ENCODE measurements at regions of chr2 and their contacts with region 1.

Region 1: DNA sequence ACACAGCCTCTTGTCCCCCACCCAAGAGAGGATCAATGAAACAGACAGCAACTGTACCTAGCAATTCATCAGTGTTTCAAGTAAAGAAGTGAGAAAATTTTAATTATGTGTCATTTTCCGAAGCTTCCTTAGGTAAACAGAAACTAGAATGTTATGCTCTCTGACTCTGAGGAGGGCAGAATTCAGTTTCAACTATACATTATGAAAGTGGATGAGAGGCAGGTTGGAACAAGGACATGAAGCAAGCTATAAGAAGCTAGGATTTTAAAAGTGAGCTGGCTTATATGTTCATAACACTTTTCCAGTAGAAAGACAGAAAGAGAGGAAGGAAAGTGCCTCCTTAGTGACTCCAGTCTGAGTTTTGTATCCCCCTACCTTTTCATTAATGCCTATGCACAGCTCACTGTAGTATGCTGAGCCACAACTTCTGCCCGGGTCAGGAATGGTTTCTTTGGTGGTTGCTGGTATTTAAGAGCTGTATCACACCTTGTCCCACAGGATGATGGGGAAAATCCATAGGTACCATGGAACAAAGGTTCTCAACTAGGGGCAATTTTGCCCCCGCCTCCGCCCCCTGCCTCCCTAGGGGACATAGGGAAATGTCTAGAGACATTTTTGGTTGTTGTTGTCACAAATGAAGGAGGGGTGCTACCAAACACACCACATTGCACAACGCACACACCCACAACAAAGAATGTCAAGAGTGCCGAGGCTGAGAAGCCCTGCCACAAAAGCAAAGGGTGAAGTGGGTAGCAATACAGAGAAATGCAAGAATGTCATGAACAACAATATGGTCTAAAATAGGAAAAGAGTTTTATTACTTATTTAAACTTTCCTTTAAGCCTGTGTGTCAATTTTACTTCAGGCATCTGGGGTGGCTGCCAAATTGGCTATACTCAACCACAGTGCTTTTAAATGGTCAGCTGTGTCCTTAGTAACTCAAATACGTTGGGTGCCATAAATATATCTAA is 161.0 kb upstream of the ZFP36L2 start:
- DNase-seq: peak; percentile 86
- ATAC-seq: peak; percentile 84
- H3K4me3 ChIP-seq: peak overlapping the region; percentile 56
- H3K27ac ChIP-seq: peak overlapping the region; percentile 99
- H3K4me1 ChIP-seq: peaks cover 53% of the 10 kb centered on the region
- H3K27me3 ChIP-seq: no peaks in the 10 kb centered on the region
- CTCF ChIP-seq: no peak
- EP300 ChIP-seq: peak; percentile 81 to 92; a peak in 3 of 4 replicates
- POLR2A ChIP-seq: no peak
- RAD21 ChIP-seq: no peak

Region 2: DNA sequence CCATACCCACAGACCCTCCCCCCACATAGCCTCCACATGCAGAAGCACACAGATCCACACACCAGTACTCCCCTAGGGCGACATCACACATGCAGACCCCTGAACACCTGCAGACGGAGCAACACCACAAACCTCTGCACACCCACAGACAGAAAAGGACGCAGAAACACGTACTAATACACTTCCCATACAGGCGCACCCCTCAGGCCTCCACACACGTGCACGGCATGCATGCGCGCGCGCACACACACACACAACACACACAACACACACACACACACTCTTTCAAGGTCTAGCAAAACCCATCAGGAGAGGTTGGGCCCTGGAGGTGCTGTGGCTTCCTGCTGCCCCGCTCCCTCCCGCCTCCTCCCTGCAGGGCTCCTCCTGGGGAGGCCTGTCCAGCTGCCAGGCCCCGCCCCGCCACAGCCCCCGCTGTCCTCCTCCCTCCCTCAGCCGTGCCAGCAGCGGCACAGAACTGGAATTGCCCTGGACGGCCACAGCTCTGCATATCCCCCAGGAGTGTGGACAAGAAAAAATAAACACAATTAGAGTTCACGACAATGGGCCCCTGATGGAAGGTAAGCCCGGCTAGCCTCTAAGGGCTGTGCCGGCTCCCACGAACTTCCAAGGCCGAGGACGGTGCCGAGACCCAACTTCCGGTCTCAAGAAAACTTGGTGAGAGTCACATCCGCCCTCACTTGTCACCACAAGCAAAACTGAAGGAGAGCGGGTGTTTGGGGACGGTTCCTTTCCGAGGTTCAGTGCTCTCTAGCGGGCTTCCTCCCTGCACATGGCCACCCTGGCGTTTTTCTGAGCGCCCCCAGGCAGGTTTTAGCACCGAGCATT is 167.8 kb before region 1 on chr2:
- CTCF ChIA-PET with region 1: interaction called, 3 read pairs
- POLR2A ChIA-PET with region 1: no interaction called
- RAD21 ChIA-PET with region 1: interaction called, 10 read pairs
- SMC1A ChIA-PET with region 1: no interaction called
- in situ Hi-C with region 1: no loop called
- intact Hi-C with region 1: no loop called
- DNase-seq: peak; percentile 80
- ATAC-seq: peak; percentile 75
- H3K4me3 ChIP-seq: peak overlapping the region; percentile 81
- H3K27ac ChIP-seq: peak overlapping the region; percentile 88
- H3K4me1 ChIP-seq: peaks cover 31% of the 10 kb centered on the region
- H3K27me3 ChIP-seq: no peaks in the 10 kb centered on the region
- CTCF ChIP-seq: no peak; a peak in 1 of 6 replicates
- EP300 ChIP-seq: peak; percentile 32 to 46; a peak in 1 of 4 replicates
- POLR2A ChIP-seq: no peak
- RAD21 ChIP-seq: no peak

Region 3: DNA sequence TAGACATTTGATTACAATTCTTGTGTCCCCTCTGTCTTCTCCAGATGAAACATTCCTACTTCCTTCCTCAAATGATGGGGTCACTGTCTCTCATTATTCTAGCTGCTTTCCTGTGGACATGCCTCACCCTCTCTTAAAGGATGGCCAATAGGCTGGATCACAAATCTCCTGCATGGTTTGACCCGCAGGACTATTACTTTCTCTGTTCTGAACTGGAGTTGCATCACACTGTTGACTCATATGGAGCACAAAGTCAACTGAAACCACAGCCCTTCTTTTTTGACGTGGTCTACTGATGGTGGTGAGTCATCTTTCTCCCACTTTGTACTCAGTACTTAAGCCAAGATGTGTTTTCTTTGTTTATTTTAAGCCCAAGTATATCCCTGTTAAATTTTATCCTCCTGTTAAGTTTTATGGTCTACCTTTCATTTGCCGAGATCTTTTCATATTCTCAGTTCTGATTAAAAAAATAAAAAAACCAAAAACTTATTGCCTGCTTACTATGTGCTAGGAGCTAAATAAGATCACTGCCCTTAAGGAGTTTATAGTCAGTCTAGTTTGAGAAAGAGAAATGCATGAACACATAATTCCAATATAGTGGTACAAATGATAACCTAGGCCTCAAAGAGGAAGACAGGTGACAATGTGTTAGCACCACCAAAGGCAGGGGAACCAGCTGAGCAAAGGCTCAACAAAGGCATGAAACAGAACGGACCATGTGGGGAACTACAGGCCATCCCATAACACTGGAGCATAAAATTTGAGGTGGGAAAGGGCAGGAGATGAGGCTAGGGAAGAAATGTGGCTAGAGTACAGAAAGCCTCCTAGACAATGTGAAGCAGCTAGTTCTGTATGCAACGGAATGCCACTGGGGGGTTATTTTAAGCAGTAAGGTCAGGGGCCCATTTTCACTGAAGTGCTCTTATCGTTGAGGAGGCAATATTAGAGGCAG is 93.4 kb before region 1 on chr2:
- CTCF ChIA-PET with region 1: interaction called, 6 read pairs
- POLR2A ChIA-PET with region 1: no interaction called
- RAD21 ChIA-PET with region 1: interaction called, 14 read pairs
- SMC1A ChIA-PET with region 1: interaction called, 18 read pairs
- in situ Hi-C with region 1: no loop called
- intact Hi-C with region 1: no loop called
- DNase-seq: peak; percentile 90
- ATAC-seq: peak; percentile 98
- H3K4me3 ChIP-seq: peak overlapping the region; percentile 6; the same call in 1 of the 2 replicates
- H3K27ac ChIP-seq: peak overlapping the region; percentile 78
- H3K4me1 ChIP-seq: peaks cover 21% of the 10 kb centered on the region
- H3K27me3 ChIP-seq: no peaks in the 10 kb centered on the region
- CTCF ChIP-seq: no peak
- EP300 ChIP-seq: peak; percentile 87 to 88; a peak in 3 of 4 replicates
- POLR2A ChIP-seq: no peak
- RAD21 ChIP-seq: 0 out of 2 replicates have a peak, but pooled peaks have one; percentile 5

Region 4: GRCh38 chr2:43402452-43402944 is 15.1 kb after region 1 on chr2:
- CTCF ChIA-PET with region 1: interaction called, 111 read pairs
- POLR2A ChIA-PET with region 1: interaction called, 95 read pairs
- RAD21 ChIA-PET with region 1: interaction called, 250 read pairs
- SMC1A ChIA-PET with region 1: interaction called, 297 read pairs
- in situ Hi-C with region 1: no loop called
- intact Hi-C with region 1: loop called (anchors 1 kb)
- DNase-seq: peak; percentile 79
- ATAC-seq: peak; percentile 73
- H3K4me3 ChIP-seq: peak overlapping the region; percentile 40
- H3K27ac ChIP-seq: peak overlapping the region; percentile 97
- H3K4me1 ChIP-seq: peaks cover 64% of the 10 kb centered on the region
- H3K27me3 ChIP-seq: no peaks in the 10 kb centered on the region
- CTCF ChIP-seq: no peak
- EP300 ChIP-seq: peak in 1 of 2 experiments; percentile 22; a peak in 1 of 4 replicates
- POLR2A ChIP-seq: peak; percentile 38
- RAD21 ChIP-seq: peak; percentile 34

Region 5: GRCh38 chr2:43408407-43409160 is 21.2 kb after region 1 on chr2:
- CTCF ChIA-PET with region 1: interaction called, 111 read pairs
- POLR2A ChIA-PET with region 1: interaction called, 95 read pairs
- RAD21 ChIA-PET with region 1: interaction called, 250 read pairs
- SMC1A ChIA-PET with region 1: interaction called, 297 read pairs
- in situ Hi-C with region 1: no loop called
- intact Hi-C with region 1: no loop called
- DNase-seq: peak; percentile 76
- ATAC-seq: peak; percentile 86
- H3K4me3 ChIP-seq: no peak overlapping the region
- H3K27ac ChIP-seq: peak overlapping the region; percentile 94
- H3K4me1 ChIP-seq: peaks cover 50% of the 10 kb centered on the region
- H3K27me3 ChIP-seq: no peaks in the 10 kb centered on the region
- CTCF ChIP-seq: no peak
- EP300 ChIP-seq: peak; percentile 71 to 87; a peak in 2 of 4 replicates
- POLR2A ChIP-seq: no peak
- RAD21 ChIP-seq: no peak

Region 6: GRCh38 chr2:43461453-43462073 is 74.2 kb after region 1 on chr2:
- CTCF ChIA-PET with region 1: no interaction called
- POLR2A ChIA-PET with region 1: interaction called, 7 read pairs
- RAD21 ChIA-PET with region 1: interaction called, 6 read pairs
- SMC1A ChIA-PET with region 1: interaction called, 12 read pairs
- in situ Hi-C with region 1: no loop called
- intact Hi-C with region 1: no loop called
- DNase-seq: peak; percentile 81
- ATAC-seq: peak; percentile 97
- H3K4me3 ChIP-seq: peak overlapping the region; percentile 12; the same call in 1 of the 2 replicates
- H3K27ac ChIP-seq: peak overlapping the region; percentile 76
- H3K4me1 ChIP-seq: peaks cover 40% of the 10 kb centered on the region
- H3K27me3 ChIP-seq: no peaks in the 10 kb centered on the region
- CTCF ChIP-seq: no peak
- EP300 ChIP-seq: peak; percentile 53 to 62; a peak in 2 of 4 replicates
- POLR2A ChIP-seq: peak; percentile 54
- RAD21 ChIP-seq: peak; percentile 24; the same call in 1 of the 2 replicates

Region 7: GRCh38 chr2:43478411-43479086 is 91.2 kb after region 1 on chr2:
- CTCF ChIA-PET with region 1: interaction called, 13 read pairs
- POLR2A ChIA-PET with region 1: interaction called, 7 read pairs
- RAD21 ChIA-PET with region 1: interaction called, 63 read pairs
- SMC1A ChIA-PET with region 1: interaction called, 54 read pairs
- in situ Hi-C with region 1: no loop called
- intact Hi-C with region 1: loop called (anchors 2 kb)
- DNase-seq: no peak
- ATAC-seq: peak; percentile 56
- H3K4me3 ChIP-seq: no peak overlapping the region
- H3K27ac ChIP-seq: peak overlapping the region; percentile 2; the same call in 1 of the 2 replicates
- H3K4me1 ChIP-seq: peaks cover 25% of the 10 kb centered on the region
- H3K27me3 ChIP-seq: no peaks in the 10 kb centered on the region
- CTCF ChIP-seq: no peak
- EP300 ChIP-seq: peak; percentile 34 to 47; a peak in 1 of 4 replicates
- POLR2A ChIP-seq: no peak
- RAD21 ChIP-seq: no peak

Measured in GM12878 (cell line).